Tibial artery (tissue), 4 donors: ENCODE measurements at regions of chr14 and their contacts with region 1.

Region 1: DNA sequence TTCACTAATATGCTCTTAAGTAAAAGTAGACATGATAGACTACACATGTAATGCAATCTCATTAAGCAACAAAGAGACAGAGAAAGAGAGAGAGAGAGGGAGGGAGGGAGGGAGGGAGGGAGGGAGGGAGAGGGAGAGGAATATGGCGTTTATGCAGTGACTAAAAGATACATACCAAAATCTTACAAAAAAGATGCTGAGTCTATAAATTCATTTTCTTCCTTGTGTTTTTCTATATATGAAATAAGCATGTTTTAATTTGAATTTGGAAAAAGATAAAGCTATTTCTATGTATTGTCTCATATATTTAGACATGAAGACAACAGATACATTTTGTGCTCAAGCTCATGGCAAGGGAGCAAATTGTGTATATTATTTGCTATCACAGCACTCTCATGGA is 44.1 kb downstream of the LRFN5 start:
- DNase-seq: no peak
- H3K4me3 ChIP-seq: no peak overlapping the region
- H3K27ac ChIP-seq: no peak overlapping the region
- H3K4me1 ChIP-seq: no peaks in the 10 kb centered on the region
- H3K27me3 ChIP-seq: no peaks in the 10 kb centered on the region
- CTCF ChIP-seq: no peak

Region 2: DNA sequence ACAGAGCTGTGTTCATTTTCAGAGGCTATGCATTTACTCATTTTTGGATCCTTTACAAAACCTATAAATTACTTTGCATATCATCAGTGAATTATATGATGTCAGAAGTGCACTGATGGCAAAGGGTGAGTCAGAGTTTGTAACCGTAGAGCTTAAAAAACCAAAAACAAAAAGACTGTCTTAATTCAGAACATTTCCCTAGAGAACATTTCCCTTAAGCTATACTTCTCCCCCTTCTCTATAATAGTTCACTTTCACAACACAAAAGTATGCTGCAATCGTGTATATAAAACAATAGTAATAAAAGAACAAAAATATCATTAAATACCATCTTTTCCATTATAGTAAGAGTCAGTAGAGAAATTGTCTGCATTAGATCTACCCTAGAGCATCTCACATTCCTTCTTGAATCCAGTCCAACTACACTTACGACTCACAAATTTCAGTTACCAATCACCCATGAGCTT is 890.8 kb after region 1 on chr14:
- intact Hi-C with region 1: no loop called
- DNase-seq: no peak
- H3K4me3 ChIP-seq: no peak overlapping the region
- H3K27ac ChIP-seq: no peak overlapping the region
- H3K4me1 ChIP-seq: no peaks in the 10 kb centered on the region
- H3K27me3 ChIP-seq: no peaks in the 10 kb centered on the region
- CTCF ChIP-seq: no peak

Region 3: GRCh38 chr14:42961509-42961908 is 1310.7 kb after region 1 on chr14:
- intact Hi-C with region 1: loop called (anchors 5 kb)
- DNase-seq: no peak
- H3K4me3 ChIP-seq: no peak overlapping the region
- H3K27ac ChIP-seq: no peak overlapping the region
- H3K4me1 ChIP-seq: no peaks in the 10 kb centered on the region
- H3K27me3 ChIP-seq: no peaks in the 10 kb centered on the region
- CTCF ChIP-seq: no peak